IMR-90 (cell line): ENCODE measurements at regions of chr14 and their contacts with region 1.

Region 1: DNA sequence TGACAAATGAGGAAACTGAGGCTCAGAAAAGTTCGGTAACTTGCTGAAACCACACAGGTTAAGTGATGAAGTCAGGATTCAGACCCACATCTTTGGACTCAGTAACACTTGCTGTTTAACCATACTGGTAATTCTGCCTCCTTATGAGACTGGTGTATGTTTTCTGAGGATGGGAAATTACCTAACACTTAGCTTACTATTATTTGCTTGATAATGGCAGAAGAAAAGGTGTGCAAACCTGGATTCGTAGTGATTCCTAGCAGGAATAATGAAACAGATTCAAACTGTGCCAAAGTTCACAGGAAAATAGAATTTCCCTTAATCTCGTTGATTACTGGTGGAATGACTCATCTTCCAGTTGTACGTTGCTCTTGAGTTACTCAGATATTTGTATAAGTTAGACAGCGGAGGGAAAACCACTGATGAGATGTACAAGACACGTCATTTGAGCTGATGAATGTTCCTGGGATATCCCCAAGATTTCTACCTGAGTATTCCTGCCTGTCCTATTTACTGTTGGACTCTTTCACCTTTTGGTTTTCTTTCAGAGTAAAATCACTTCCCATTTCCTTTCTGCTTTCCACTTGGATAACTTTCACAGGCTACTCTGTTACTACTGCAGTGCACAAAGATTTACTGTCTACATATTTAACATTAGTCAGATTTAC is 37.5 kb downstream of the PRORP start:
- DNase-seq: peak; percentile 97
- ATAC-seq: peak; percentile 88
- H3K4me3 ChIP-seq: no peak overlapping the region
- H3K27ac ChIP-seq: peak overlapping the region; percentile 23; the same call in 1 of the 2 replicates
- H3K4me1 ChIP-seq: peaks cover 10% of the 10 kb centered on the region
- H3K27me3 ChIP-seq: no peaks in the 10 kb centered on the region
- CTCF ChIP-seq: no peak
- POLR2A ChIP-seq: no peak
- RAD21 ChIP-seq: no peak

Region 2: DNA sequence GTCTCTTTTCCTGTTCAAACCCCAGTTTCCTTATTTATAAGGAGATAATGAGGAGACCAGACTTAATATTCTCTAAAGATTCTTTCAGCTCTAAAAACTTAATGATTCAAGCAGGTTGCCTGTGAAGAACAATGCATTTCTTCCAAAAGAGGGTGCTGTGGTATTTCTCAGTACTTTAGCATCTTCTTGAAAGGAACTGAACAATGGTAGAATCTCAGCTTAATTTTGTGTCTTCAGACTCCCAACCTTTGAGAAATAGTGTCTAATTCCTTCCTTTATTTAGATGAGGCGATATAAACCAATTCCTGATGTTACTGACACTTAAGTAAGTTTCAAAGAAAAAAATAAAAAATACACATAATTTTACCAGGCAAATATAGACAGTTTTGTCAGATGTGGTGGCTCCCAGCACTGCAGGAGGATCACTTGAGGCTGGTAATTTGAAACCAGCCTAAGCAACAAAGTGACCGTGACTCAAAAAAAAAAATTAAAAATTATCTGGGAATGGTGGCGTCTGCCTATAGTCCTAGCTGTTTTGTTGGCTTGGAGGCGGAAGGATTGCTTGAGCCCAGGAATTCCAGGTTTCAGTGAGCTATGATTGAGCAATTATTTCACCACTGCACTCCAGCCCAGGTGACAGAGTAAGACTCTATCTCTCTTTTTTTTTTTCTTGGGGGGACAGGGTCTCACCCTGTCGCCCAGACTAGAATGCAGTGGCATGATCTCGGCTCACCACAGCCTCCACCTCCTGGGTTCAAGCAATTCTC is 55.4 kb after region 1 on chr14:
- CTCF ChIA-PET with region 1: no interaction called
- POLR2A ChIA-PET with region 1: no interaction called
- dilution Hi-C with region 1: no loop called
- in situ Hi-C with region 1: no loop called
- intact Hi-C with region 1: loop called (anchors 5 kb)
- DNase-seq: peak; percentile 80
- ATAC-seq: peak; percentile 83
- H3K4me3 ChIP-seq: no peak overlapping the region
- H3K27ac ChIP-seq: no peak overlapping the region
- H3K4me1 ChIP-seq: peaks cover 7% of the 10 kb centered on the region
- H3K27me3 ChIP-seq: no peaks in the 10 kb centered on the region
- CTCF ChIP-seq: peak; percentile 84
- POLR2A ChIP-seq: no peak
- RAD21 ChIP-seq: peak; percentile 70

Region 3: DNA sequence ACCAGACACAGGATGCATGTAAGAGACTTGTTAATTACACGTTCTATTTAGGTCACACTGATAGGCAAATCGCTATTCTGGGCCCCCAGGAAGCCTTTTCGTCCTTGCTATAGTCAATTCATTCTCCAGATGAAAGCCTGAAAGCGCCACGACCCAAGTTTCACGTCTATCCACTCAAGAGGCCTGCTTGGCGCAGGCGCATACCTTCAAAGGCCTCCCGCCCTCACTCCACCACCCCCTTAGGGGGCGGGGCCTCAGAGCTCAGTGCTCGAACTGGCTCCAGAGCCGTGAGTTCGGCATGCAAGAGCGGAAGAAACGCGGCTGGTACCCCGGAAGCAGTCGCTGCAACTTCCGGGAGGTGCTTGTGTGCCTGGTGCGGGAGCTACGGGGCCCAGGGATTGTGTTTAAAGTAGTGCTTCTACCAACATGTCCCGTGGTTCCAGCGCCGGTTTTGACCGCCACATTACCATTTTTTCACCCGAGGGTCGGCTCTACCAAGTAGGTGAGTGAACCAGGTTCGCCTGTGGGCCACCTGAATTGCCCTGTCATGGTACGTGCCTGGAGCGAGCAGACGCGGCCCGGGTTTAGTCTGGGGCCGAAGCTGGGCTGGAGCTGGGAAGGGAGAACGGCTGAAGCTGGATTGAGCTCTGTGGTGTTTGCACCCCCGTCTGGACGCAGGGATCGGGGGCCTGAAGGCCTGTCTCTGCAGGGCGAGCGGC is 132.3 kb after region 1 on chr14 and contains the start of gene PSMA6:
- CTCF ChIA-PET with region 1: no interaction called
- POLR2A ChIA-PET with region 1: no interaction called
- dilution Hi-C with region 1: no loop called
- in situ Hi-C with region 1: no loop called
- intact Hi-C with region 1: loop called (anchors 5 kb)
- DNase-seq: peak; percentile 99
- ATAC-seq: peak; percentile 98
- H3K4me3 ChIP-seq: peak within 1 kb of the TSS; percentile 74
- H3K27ac ChIP-seq: peak within 1 kb of the TSS; percentile 90
- H3K4me1 ChIP-seq: peaks cover 2% of the 10 kb centered on the region
- H3K27me3 ChIP-seq: no peaks in the 10 kb centered on the region
- CTCF ChIP-seq: no peak
- POLR2A ChIP-seq: peak; percentile 85
- RAD21 ChIP-seq: peak; percentile 17; the same call in 1 of the 2 replicates
- total RNA-seq, gene PSMA6: 435 and 530 TPM in 2 replicates